Psoas muscle (tissue), 8 donors: ENCODE measurements at regions of chr11 and their contacts with region 1.

Region 1: GRCh38 chr11:68383976-68384501 is 71.6 kb downstream of the LRP5 start:
- DNase-seq: peak; percentile 67 to 80
- ATAC-seq: peak; percentile 41 to 76 (median 57)
- H3K4me3 ChIP-seq: no peak overlapping the region
- H3K27ac ChIP-seq: no peak overlapping the region
- H3K4me1 ChIP-seq: peaks cover 42% of the 10 kb centered on the region
- H3K27me3 ChIP-seq: no peaks in the 10 kb centered on the region
- CTCF ChIP-seq: peak; percentile 88

Region 2: GRCh38 chr11:68271781-68272608 is 112.0 kb before region 1 on chr11 and contains the start of gene C11orf24:
- intact Hi-C with region 1: loop called in 1 of 2 experiments (anchors 5 kb)
- DNase-seq: peak; percentile 95 to 98
- ATAC-seq: peak; percentile 96 to 97 (median 96)
- H3K4me3 ChIP-seq: peak within 1 kb of the TSS; percentile 72
- H3K27ac ChIP-seq: peak within 1 kb of the TSS; percentile 88
- H3K4me1 ChIP-seq: peaks cover 25% of the 10 kb centered on the region
- H3K27me3 ChIP-seq: no peaks in the 10 kb centered on the region
- CTCF ChIP-seq: no peak
- total RNA-seq, gene C11orf24: 9.0 to 22.2 (median 19.1) TPM

Region 3: DNA sequence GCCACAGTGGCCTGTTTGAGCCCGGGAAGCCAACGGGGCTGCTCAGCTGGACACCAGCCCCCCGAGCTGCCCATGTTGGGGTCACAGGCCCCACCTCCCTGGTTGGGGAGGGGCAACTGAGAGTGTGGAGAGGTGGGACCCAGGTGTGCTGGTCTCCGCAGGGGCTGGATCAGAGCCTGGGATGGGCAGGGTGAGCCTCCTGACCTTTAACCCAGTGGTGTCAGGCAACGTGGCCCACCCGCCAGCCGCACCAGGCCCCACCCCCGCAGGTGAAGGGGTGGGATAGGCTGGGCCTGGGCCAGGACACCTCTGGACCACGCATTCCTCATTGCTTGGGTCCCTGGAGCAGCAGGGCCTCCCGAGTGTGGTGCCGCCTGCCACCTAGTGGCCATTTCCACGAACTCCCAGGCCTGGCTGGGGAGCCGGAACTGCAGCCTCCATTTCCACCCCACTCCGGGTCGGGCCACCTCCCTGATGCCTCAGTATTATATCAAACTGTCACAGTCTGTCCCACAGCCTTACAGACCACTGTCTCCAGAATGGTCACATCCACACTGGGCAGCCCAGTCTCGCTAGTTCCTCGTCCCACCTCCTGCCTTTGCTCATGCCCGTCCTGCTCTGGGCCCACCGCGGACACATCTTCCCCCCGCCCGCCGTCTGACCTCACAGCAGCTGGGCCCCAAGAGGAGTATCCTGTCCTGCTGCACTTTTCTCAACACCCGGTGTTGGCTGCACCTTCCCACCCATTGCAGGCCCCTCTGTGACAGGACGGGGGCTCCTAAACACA is 63.2 kb after region 1 on chr11:
- intact Hi-C with region 1: loop called in 1 of 2 experiments (anchors 5 kb)
- DNase-seq: peak; percentile 78 to 90
- ATAC-seq: peak; percentile 86 to 95 (median 90)
- H3K4me3 ChIP-seq: no peak overlapping the region
- H3K27ac ChIP-seq: no peak overlapping the region
- H3K4me1 ChIP-seq: no peaks in the 10 kb centered on the region
- H3K27me3 ChIP-seq: no peaks in the 10 kb centered on the region
- CTCF ChIP-seq: peak; percentile 95